ENCODE measurements at regions of chr17 and their contacts with region 1.

Region 1: DNA sequence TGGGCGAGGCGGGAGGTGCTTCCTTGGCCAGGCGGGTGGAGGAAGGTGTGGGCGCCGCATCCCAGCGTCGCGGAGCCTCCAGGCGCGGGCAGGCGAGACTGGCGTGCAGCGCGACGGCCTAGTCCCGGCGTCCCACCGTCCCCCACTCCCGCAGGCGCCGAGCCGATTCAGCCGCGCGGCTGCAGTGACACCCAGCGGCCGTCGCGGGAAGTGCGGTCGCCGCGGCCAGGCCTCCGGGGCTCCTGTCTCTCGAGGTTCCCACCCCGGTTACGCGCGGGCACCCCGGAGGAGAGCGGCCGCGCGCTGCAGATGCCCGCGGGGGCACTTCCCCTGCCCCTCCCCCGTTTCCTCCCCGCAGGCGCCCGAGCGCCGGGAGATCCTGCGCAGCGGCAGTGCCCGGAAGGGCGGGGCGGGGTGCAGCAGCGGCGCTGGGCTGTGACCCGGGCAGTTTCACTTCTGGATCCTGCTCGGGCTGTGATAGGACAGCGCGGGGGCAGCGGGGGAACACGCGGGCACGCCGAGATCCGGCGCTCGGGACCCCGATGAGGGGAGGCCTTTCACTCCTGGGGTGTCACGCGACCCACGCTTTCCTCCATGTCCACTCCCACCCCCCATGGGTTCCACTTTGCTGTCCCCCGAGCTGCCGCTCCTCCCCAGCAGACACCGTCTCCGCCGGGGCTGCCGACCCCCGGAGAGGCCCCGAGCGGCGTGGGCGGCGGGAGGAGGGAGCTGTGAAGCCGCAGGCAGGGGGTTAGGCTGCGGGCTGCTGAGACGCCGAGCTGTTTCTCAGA is 16.6 kb downstream of the GRB7 start:
- DNase-seq: peak; percentile 74
- ATAC-seq: peak; percentile 95
- H3K4me3 ChIP-seq: peak overlapping the region; percentile 76
- H3K27ac ChIP-seq: peak overlapping the region; percentile 72
- H3K4me1 ChIP-seq: peaks cover 7% of the 10 kb centered on the region
- H3K27me3 ChIP-seq: peaks cover 19% of the 10 kb centered on the region
- CTCF ChIP-seq: peak; percentile 93
- POLR2A ChIP-seq: peak; percentile 30
- RAD21 ChIP-seq: peak; percentile 89

Region 2: GRCh38 chr17:39045948-39046679 is 708.2 kb before region 1 on chr17:
- CTCF ChIA-PET with region 1: no interaction called
- POLR2A ChIA-PET with region 1: no interaction called
- dilution Hi-C with region 1: no loop called
- in situ Hi-C with region 1: no loop called
- intact Hi-C with region 1: no loop called
- DNase-seq: no peak
- ATAC-seq: no peak
- H3K4me3 ChIP-seq: no peak overlapping the region
- H3K27ac ChIP-seq: peak overlapping the region; percentile 50
- H3K4me1 ChIP-seq: no peaks in the 10 kb centered on the region
- H3K27me3 ChIP-seq: peaks cover 9% of the 10 kb centered on the region
- CTCF ChIP-seq: no peak
- POLR2A ChIP-seq: no peak
- RAD21 ChIP-seq: no peak

Region 3: DNA sequence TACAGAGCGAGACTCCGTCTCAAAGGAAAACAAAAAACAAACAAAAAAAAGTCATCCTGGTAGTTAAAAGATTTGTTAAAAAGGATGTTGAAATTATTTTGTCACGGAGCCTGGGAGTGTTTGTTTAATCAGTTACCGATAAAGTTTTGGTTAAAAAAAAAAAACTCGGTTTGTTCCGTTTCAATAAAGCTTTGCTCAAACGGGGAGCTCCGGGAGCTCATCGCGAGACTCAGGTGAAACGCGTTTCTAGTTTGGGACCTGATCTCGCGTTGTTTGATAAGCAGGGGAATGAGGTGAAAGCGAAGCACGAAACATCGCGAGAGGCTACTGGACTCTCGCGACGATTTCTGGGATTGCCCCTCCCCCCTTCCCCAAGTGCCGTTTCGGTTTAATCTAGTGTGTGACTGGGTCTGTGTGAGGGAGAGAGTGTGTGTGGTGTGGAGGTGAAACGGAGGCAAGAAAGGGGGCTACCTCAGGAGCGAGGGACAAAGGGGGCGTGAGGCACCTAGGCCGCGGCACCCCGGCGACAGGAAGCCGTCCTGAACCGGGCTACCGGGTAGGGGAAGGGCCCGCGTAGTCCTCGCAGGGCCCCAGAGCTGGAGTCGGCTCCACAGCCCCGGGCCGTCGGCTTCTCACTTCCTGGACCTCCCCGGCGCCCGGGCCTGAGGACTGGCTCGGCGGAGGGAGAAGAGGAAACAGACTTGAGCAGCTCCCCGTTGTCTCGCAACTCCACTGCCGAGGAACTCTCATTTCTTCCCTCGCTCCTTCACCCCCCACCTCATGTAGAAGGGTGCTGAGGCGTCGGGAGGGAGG is 293.0 kb before region 1 on chr17 and contains the start of gene CDK12:
- CTCF ChIA-PET with region 1: no interaction called
- POLR2A ChIA-PET with region 1: no interaction called
- dilution Hi-C with region 1: no loop called
- in situ Hi-C with region 1: no loop called
- intact Hi-C with region 1: no loop called
- DNase-seq: peak; percentile 100
- ATAC-seq: peak; percentile 91
- H3K4me3 ChIP-seq: peak within 1 kb of the TSS; percentile 82
- H3K27ac ChIP-seq: peak within 1 kb of the TSS; percentile 94
- H3K4me1 ChIP-seq: no peaks in the 10 kb centered on the region
- H3K27me3 ChIP-seq: no peaks in the 10 kb centered on the region
- CTCF ChIP-seq: no peak
- POLR2A ChIP-seq: peak; percentile 96
- RAD21 ChIP-seq: no peak
- total RNA-seq, gene CDK12: 27.1 and 31.1 TPM in 2 replicates

Region 4: GRCh38 chr17:39730095-39730921 is 24.0 kb before region 1 on chr17 and contains the start of gene MIEN1:
- CTCF ChIA-PET with region 1: interaction called, 3 read pairs
- POLR2A ChIA-PET with region 1: no interaction called
- dilution Hi-C with region 1: no loop called
- in situ Hi-C with region 1: no loop called
- intact Hi-C with region 1: loop called (anchors 1 kb)
- DNase-seq: peak; percentile 68
- ATAC-seq: peak; percentile 97
- H3K4me3 ChIP-seq: peak within 1 kb of the TSS; percentile 74
- H3K27ac ChIP-seq: peak within 1 kb of the TSS; percentile 87
- H3K4me1 ChIP-seq: peaks cover 5% of the 10 kb centered on the region; the same call in 1 of the 2 replicates
- H3K27me3 ChIP-seq: no peaks in the 10 kb centered on the region
- CTCF ChIP-seq: peak; percentile 89
- POLR2A ChIP-seq: peak; percentile 84
- RAD21 ChIP-seq: peak; percentile 43
- total RNA-seq, gene MIEN1: 20.3 and 22.2 TPM in 2 replicates

Measured in IMR-90 (cell line).